Caco-2 (cell line): ENCODE measurements at regions of chr6 and their contacts with region 1.

Region 1: DNA sequence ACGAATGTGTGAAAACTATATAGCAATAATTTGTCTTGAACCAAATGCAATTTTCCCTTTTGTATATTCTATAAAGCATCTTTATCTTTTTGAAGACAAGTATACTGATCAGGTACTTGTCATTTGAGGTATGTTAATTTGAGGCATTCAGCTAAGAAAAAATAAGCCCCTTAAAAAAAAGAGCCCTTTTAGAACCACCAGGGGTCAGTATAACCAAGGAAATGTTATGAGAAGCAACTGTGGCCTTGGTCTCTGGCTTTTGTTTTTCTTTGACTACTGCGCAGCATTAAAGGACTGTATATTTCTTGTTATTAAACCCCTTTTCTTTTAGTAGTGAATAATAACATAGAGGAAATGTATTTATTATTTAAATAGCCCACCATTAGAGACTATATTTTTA is 43.1 kb downstream of the CD109 start:
- DNase-seq: peak in 1 of 2 experiments; percentile 56
- H3K4me3 ChIP-seq: no peak overlapping the region
- H3K4me3 Mint-ChIP-seq: no peak overlapping the region
- H3K27ac Mint-ChIP-seq: no peak overlapping the region
- H3K4me1 ChIP-seq: no peaks in the 10 kb centered on the region
- H3K4me1 Mint-ChIP-seq: no peaks in the 10 kb centered on the region
- H3K27me3 ChIP-seq: no peaks in the 10 kb centered on the region
- H3K27me3 Mint-ChIP-seq: peaks cover 3% of the 10 kb centered on the region
- CTCF ChIP-seq: peak; percentile 63 to 82

Region 2: GRCh38 chr6:73898624-73899023 is 159.5 kb after region 1 on chr6:
- CTCF ChIA-PET with region 1: no interaction called
- POLR2A ChIA-PET with region 1: no interaction called
- intact Hi-C with region 1: loop called (anchors 1 kb)
- DNase-seq: peak in 1 of 2 experiments; percentile 14
- H3K4me3 ChIP-seq: no peak overlapping the region
- H3K4me3 Mint-ChIP-seq: no peak overlapping the region
- H3K27ac Mint-ChIP-seq: no peak overlapping the region
- H3K4me1 ChIP-seq: no peaks in the 10 kb centered on the region
- H3K4me1 Mint-ChIP-seq: no peaks in the 10 kb centered on the region
- H3K27me3 ChIP-seq: no peaks in the 10 kb centered on the region
- H3K27me3 Mint-ChIP-seq: no peaks in the 10 kb centered on the region
- CTCF ChIP-seq: peak in 1 of 2 experiments; percentile 25

Region 3: DNA sequence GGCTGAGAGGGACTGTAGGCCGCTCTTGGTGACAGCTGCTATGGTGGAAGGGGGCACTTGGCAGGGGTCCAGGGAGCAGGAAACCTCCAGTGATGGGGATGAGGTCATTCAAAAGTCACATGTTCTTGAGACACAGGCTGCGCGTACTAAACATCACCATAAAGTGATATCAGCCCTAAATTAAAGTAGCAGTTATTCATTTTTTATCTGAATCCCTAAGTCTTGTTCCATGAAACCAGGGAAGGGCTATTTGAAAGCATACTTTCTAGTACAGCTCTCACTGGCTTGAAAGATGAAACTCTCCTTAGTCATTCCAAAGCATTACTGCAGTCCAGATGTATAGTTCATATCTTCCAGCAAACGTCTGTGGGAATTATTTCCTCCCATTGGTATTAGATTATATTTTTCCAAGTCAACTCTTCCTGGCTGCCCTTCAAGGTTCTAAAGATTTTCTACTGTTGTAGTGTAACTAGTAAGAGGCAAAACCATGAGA is 330.0 kb after region 1 on chr6:
- CTCF ChIA-PET with region 1: no interaction called
- POLR2A ChIA-PET with region 1: no interaction called
- intact Hi-C with region 1: no loop called
- DNase-seq: no peak
- H3K4me3 ChIP-seq: no peak overlapping the region
- H3K4me3 Mint-ChIP-seq: no peak overlapping the region
- H3K27ac Mint-ChIP-seq: no peak overlapping the region
- H3K4me1 ChIP-seq: no peaks in the 10 kb centered on the region
- H3K4me1 Mint-ChIP-seq: no peaks in the 10 kb centered on the region
- H3K27me3 ChIP-seq: no peaks in the 10 kb centered on the region
- H3K27me3 Mint-ChIP-seq: no peaks in the 10 kb centered on the region
- CTCF ChIP-seq: no peak